ENCODE measurements at regions of chr7 and their contacts with region 1.

Region 1: DNA sequence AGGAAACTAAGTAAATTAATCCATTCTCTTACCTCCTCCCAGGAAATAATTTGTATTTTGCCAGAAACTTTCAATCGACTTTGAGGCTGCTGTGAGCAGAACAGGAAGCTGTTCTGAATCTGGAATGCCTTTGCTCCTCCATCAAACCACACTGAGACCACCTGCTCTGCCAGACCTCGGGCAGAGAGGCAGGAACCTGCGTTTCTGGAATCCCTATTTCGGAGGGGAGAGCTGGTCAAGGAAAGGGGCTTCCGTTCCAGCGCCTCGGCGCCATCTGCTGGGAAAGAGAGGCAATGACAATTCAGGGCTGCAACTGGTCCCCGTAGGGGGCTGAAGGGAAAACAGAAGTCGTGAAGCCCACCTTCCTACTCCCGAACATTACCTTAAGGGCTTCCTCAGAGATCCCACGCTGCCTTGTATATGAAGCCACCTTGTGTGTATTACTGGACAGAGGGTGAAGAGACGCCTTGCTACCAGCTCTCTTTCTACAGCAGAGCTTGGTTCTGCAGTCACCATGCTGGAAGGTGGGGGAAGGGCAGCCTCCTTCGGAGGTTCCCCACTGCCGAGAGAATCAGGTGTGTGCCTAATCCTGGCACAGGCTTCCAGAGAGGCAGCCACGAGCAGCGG is 31.2 kb downstream of the ZNF467 start:
- DNase-seq: peak; percentile 69
- H3K4me3 Mint-ChIP-seq: peak overlapping the region; percentile 58
- H3K27ac Mint-ChIP-seq: no peak overlapping the region
- H3K4me1 Mint-ChIP-seq: peaks cover 11% of the 10 kb centered on the region
- H3K27me3 Mint-ChIP-seq: peaks cover 22% of the 10 kb centered on the region

Region 2: GRCh38 chr7:149496642-149497391 is 245.4 kb before region 1 on chr7:
- CTCF ChIA-PET with region 1: no interaction called
- POLR2A ChIA-PET with region 1: no interaction called
- intact Hi-C with region 1: no loop called
- DNase-seq: peak; percentile 65
- H3K4me3 Mint-ChIP-seq: peak overlapping the region; percentile 98
- H3K27ac Mint-ChIP-seq: peak overlapping the region; percentile 94
- H3K4me1 Mint-ChIP-seq: peaks cover 33% of the 10 kb centered on the region
- H3K27me3 Mint-ChIP-seq: peaks cover 2% of the 10 kb centered on the region

Region 3: DNA sequence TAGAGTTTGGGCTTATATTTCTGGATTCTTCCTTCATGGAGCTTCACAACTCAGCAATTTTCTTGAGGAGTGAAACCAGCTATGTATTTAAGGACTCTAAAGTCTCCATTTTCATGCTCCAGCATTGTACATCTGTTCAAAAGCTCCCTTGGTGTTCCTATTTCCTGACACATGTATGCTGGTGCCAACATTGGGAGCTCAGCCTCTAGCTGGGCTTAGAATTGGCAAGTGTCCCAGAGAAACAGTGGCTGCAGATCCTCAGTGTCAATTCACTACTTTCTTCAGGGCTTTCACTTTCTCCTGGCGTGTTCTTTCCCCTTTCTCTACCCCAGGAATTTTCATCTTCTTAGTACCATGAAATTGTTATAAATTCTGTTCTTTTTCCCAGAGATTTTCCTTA is 71.9 kb before region 1 on chr7:
- CTCF ChIA-PET with region 1: interaction called, 23 read pairs
- POLR2A ChIA-PET with region 1: no interaction called
- intact Hi-C with region 1: no loop called
- DNase-seq: no peak
- H3K4me3 Mint-ChIP-seq: no peak overlapping the region
- H3K27ac Mint-ChIP-seq: no peak overlapping the region
- H3K4me1 Mint-ChIP-seq: peaks cover 2% of the 10 kb centered on the region
- H3K27me3 Mint-ChIP-seq: peaks cover 33% of the 10 kb centered on the region

Region 4: DNA sequence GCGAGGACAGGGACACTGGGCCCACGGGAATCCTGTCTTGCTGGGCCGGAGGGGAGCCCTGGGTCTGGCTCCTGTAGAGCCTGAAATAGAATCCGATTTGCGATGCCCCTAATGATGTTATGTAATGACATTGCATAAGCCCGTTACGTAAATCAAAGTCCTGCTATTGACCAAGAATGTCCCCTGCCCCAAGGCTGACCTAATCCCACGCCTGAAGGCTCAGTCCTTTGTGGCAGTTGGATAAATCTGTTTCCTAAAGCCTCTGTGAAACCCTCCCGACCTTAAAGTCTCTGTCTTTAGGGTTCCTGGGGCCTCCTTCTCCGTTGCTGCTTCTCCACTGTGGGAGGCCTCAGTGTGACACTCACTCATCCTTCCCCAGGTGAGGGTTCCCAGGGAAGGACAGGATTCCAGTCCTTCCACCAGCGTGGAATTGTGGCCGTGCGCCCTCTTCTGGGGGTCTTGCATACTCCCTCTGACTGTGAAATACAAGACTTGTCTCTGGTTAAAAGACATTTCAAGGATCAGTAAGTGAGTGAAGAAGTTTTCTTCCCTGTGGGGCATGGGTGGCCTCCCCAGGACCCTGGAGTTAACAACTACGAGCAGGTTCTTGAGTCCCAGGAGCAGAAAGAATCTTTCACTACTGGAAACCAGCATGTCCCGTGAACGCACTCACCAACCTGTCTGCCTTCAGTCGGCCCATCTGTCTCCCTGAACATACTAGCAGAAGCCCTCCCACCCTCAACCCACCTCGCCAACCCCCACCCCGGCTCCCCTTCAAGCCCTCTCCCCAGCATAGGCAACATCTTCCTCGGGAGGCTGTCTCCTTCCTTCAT is 11.4 kb after region 1 on chr7:
- CTCF ChIA-PET with region 1: interaction called, 20 read pairs
- POLR2A ChIA-PET with region 1: no interaction called
- intact Hi-C with region 1: no loop called
- DNase-seq: no peak
- H3K4me3 Mint-ChIP-seq: no peak overlapping the region
- H3K27ac Mint-ChIP-seq: no peak overlapping the region
- H3K4me1 Mint-ChIP-seq: no peaks in the 10 kb centered on the region
- H3K27me3 Mint-ChIP-seq: no peaks in the 10 kb centered on the region

Region 5: GRCh38 chr7:149783386-149784250 is 41.4 kb after region 1 on chr7:
- CTCF ChIA-PET with region 1: no interaction called
- POLR2A ChIA-PET with region 1: no interaction called
- intact Hi-C with region 1: no loop called
- DNase-seq: no peak
- H3K4me3 Mint-ChIP-seq: no peak overlapping the region
- H3K27ac Mint-ChIP-seq: no peak overlapping the region
- H3K4me1 Mint-ChIP-seq: no peaks in the 10 kb centered on the region
- H3K27me3 Mint-ChIP-seq: peaks cover 2% of the 10 kb centered on the region